MCF 10A (cell line): ENCODE measurements at regions of chr9 and their contacts with region 1.

Region 1: GRCh38 chr9:99184475-99185347 is 37.0 kb downstream of the ALG2 start:
- DNase-seq: peak; percentile 87
- H3K4me3 Mint-ChIP-seq: no peak overlapping the region
- H3K27ac Mint-ChIP-seq: no peak overlapping the region
- H3K4me1 Mint-ChIP-seq: no peaks in the 10 kb centered on the region
- H3K27me3 Mint-ChIP-seq: peaks cover 34% of the 10 kb centered on the region
- CTCF ChIP-seq: peak; percentile 91

Region 2: GRCh38 chr9:98848450-98849149 is 336.1 kb before region 1 on chr9:
- CTCF ChIA-PET with region 1: interaction called, 10 read pairs
- POLR2A ChIA-PET with region 1: no interaction called
- intact Hi-C with region 1: no loop called
- DNase-seq: peak; percentile 80
- H3K4me3 Mint-ChIP-seq: no peak overlapping the region
- H3K27ac Mint-ChIP-seq: no peak overlapping the region
- H3K4me1 Mint-ChIP-seq: peaks cover 10% of the 10 kb centered on the region
- H3K27me3 Mint-ChIP-seq: peaks cover 32% of the 10 kb centered on the region
- CTCF ChIP-seq: peak; percentile 87

Region 3: DNA sequence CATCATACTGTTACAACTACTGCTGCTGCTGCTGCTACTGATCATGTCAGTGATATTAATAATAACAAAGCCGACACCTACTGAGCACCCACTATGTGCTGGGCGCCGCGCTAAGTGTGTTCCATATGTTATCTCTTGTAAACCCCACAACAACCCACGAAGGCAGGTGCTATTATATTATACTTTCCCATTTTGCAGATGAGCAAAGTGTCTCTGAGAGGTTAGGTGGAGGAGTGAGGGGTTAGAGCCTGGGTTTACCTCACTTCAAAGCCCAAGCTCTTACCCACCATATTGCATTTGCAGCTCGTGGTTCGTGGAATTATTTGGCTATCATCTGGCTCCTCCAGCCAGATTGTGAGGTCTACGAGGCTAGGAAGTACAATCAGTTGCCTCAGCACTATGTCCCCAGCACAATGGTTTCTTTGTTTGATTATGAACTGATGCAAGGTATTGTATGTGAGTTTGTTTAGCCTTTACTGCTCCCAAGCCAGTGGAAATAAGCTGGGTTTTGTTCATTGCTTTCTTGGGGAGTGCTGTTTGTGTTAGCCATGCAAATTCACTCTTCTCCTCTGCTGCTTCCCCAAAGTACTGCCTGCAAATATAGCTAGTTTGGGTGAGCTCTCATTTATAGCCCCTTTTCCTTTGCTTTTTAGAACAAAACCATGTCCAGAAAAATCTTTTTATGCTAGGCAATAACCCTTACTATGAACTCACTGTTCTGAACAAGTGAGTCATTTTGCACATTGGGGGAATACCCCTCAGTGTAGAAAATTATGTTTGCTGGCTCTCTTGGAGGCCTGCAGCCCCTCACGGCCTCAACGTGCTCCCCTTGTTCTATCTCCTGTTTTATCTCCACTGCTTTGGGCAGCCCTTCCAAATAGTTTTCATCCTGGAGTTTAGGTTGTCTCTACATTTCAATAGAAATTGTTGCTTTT is 10.9 kb before region 1 on chr9:
- CTCF ChIA-PET with region 1: interaction called, 20 read pairs
- POLR2A ChIA-PET with region 1: interaction called, 5 read pairs
- intact Hi-C with region 1: no loop called
- DNase-seq: no peak
- H3K4me3 Mint-ChIP-seq: no peak overlapping the region
- H3K27ac Mint-ChIP-seq: no peak overlapping the region
- H3K4me1 Mint-ChIP-seq: peaks cover 6% of the 10 kb centered on the region
- H3K27me3 Mint-ChIP-seq: peaks cover 27% of the 10 kb centered on the region
- CTCF ChIP-seq: no peak

Region 4: GRCh38 chr9:99213197-99213596 is 28.5 kb after region 1 on chr9:
- CTCF ChIA-PET with region 1: interaction called, 20 read pairs
- POLR2A ChIA-PET with region 1: no interaction called
- intact Hi-C with region 1: no loop called
- DNase-seq: no peak
- H3K4me3 Mint-ChIP-seq: no peak overlapping the region
- H3K27ac Mint-ChIP-seq: no peak overlapping the region
- H3K4me1 Mint-ChIP-seq: peaks cover 10% of the 10 kb centered on the region
- H3K27me3 Mint-ChIP-seq: no peaks in the 10 kb centered on the region
- CTCF ChIP-seq: no peak

Region 5: GRCh38 chr9:99231711-99232110 is 47.0 kb after region 1 on chr9:
- CTCF ChIA-PET with region 1: interaction called, 21 read pairs
- POLR2A ChIA-PET with region 1: no interaction called
- intact Hi-C with region 1: no loop called
- DNase-seq: peak; percentile 23
- H3K4me3 Mint-ChIP-seq: no peak overlapping the region
- H3K27ac Mint-ChIP-seq: no peak overlapping the region
- H3K4me1 Mint-ChIP-seq: no peaks in the 10 kb centered on the region
- H3K27me3 Mint-ChIP-seq: no peaks in the 10 kb centered on the region
- CTCF ChIP-seq: peak; percentile 37

Region 6: DNA sequence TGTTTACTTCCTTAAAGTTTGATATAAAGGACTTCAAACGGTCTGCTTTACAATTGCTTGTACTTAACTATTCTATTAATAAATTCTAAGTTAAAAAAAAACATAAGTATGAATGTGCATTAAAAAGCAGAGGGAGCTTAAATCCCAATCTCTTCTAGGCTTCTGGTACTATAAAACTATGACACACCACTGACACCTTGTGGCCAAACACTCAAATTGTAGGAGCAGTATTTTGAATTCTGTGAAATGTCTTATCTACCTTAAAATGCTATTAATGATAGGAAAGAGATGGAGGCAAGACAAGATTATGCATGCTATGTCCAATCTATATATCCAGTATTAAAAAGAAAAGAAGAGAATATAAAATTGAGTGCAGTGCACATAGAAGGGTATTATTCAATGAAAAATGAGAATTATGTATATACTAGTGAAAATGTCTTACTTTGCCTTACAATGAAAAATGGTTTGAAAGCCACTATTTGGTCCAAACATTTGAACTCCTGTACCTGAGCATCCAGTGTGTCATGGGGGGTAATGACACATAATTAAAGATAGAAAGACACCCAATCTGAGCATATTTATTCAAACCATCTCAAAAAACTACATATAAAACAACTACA is 826.5 kb after region 1 on chr9:
- CTCF ChIA-PET with region 1: interaction called, 11 read pairs
- POLR2A ChIA-PET with region 1: no interaction called
- intact Hi-C with region 1: no loop called
- DNase-seq: peak; percentile 60
- H3K4me3 Mint-ChIP-seq: no peak overlapping the region
- H3K27ac Mint-ChIP-seq: no peak overlapping the region
- H3K4me1 Mint-ChIP-seq: no peaks in the 10 kb centered on the region
- H3K27me3 Mint-ChIP-seq: no peaks in the 10 kb centered on the region
- CTCF ChIP-seq: peak; percentile 62

Region 7: DNA sequence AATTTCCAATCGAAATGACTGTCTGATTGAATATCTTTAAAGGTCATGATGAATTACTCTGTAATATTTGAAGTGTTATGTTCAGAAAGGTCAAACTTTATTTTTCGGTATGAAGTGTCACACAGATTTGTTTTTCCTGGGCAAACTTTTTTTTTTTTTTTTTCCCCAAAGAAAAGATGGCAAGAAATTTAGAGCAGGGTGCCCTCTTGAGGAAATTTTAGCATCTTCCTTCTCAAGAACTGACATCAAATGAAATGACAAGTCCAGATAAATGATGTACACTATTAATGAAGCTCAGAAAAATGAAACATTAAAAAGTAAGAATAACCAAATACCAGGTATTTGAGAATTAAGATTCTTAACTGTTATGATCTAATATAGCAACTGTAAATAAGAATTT is 1038.0 kb after region 1 on chr9:
- CTCF ChIA-PET with region 1: interaction called, 11 read pairs
- POLR2A ChIA-PET with region 1: no interaction called
- intact Hi-C with region 1: loop called (anchors 5 kb)
- DNase-seq: peak; percentile 33
- H3K4me3 Mint-ChIP-seq: no peak overlapping the region
- H3K27ac Mint-ChIP-seq: no peak overlapping the region
- H3K4me1 Mint-ChIP-seq: no peaks in the 10 kb centered on the region
- H3K27me3 Mint-ChIP-seq: no peaks in the 10 kb centered on the region
- CTCF ChIP-seq: peak; percentile 48